OCI-LY7 (cell line): ENCODE measurements at regions of chr5 and their contacts with region 1.

Region 1: DNA sequence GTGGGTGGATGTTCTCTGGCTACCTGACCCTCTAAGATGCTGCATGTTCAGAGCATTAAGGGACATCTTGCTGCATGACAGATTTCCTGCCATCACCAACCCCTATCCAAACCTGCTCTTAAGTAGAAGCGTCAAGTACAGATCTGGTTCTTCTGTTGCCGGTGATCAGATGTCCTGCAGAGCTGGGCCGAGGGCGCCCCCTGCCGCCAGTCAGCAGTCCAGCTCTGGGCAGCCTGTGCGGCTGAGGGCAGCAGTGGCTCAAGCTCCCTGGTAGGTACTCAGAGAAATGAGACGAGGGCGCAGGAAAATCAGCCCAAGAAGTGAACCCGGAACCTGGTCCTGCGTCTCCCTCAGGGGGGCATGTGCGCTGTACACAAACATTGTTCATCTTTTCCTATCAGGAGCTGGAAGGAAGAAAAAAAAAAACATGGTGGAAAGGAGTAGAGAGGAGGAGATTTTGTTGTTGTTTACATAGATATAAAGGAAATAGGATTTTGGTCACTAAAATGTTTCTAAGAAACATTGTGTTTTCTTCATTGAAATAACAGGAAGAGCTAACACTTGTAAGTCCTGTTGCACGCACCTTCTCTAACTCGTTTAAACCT is 95.8 kb downstream of the CFAP90 start:
- DNase-seq: peak; percentile 53
- H3K4me3 ChIP-seq: no peak overlapping the region
- H3K27ac ChIP-seq: no peak overlapping the region
- H3K4me1 ChIP-seq: no peaks in the 10 kb centered on the region
- CTCF ChIP-seq: peak; percentile 88

Region 2: DNA sequence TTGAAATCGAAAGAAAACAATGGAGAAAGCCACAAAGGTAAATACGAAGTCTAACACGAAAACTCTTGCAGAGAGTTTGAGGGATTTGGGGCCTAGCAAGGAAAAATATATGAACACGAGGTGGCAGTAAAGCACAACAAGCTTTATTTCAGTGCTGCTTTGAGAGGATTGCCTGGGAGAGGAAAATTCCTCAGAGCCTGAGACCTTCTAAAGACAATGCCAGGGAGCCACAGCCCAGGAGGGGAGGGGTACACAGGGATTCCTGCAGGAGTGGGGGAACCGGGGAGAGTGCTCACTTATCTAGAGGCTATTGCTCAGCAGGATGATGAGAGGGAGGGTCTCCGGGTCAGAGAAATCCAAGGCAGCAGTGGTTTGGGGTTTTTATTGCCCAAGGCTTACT is 494.0 kb before region 1 on chr5:
- CTCF ChIA-PET with region 1: no interaction called
- POLR2A ChIA-PET with region 1: no interaction called
- intact Hi-C with region 1: loop called (anchors 5 kb)
- DNase-seq: peak; percentile 24
- H3K4me3 ChIP-seq: no peak overlapping the region
- H3K27ac ChIP-seq: no peak overlapping the region
- H3K4me1 ChIP-seq: no peaks in the 10 kb centered on the region
- CTCF ChIP-seq: peak; percentile 72

Region 3: DNA sequence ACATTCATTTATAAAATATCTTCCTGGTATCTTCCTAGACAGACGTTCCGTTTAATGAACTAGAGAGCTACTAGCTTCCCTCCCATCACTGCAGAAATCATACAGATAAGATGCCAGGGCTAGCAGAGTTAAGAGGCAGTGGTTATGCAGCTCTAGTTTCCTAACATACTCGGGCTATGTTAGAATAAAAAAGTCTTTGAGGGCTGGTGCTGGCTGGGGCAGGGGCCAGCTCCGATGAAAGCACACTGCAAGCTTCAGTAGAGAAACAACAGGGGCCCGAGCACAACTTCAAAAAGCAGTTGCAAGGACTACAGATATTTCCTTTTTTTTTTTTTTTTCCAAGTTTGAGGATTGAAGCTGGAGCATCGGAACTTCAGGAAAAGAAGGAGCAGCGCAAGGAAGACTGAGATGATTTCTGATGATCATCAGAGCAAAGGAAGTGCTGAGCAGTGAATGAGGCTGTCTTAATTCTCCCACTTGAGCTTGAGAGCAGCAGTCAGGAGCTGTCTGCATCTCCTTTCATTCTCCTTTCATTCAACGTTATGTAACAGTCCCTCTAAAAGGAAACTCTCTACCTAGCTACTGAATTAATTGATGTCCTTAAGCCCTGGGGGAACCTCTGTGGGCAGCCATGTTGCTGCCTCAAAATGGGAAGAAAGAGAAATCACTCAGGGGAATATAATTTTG is 406.8 kb before region 1 on chr5:
- CTCF ChIA-PET with region 1: no interaction called
- POLR2A ChIA-PET with region 1: no interaction called
- intact Hi-C with region 1: no loop called
- DNase-seq: no peak
- H3K4me3 ChIP-seq: no peak overlapping the region
- H3K27ac ChIP-seq: no peak overlapping the region
- H3K4me1 ChIP-seq: no peaks in the 10 kb centered on the region
- CTCF ChIP-seq: no peak